Left cardiac atrium (tissue), 4 donors: ENCODE measurements at regions of chr6 and their contacts with region 1.

Region 1: DNA sequence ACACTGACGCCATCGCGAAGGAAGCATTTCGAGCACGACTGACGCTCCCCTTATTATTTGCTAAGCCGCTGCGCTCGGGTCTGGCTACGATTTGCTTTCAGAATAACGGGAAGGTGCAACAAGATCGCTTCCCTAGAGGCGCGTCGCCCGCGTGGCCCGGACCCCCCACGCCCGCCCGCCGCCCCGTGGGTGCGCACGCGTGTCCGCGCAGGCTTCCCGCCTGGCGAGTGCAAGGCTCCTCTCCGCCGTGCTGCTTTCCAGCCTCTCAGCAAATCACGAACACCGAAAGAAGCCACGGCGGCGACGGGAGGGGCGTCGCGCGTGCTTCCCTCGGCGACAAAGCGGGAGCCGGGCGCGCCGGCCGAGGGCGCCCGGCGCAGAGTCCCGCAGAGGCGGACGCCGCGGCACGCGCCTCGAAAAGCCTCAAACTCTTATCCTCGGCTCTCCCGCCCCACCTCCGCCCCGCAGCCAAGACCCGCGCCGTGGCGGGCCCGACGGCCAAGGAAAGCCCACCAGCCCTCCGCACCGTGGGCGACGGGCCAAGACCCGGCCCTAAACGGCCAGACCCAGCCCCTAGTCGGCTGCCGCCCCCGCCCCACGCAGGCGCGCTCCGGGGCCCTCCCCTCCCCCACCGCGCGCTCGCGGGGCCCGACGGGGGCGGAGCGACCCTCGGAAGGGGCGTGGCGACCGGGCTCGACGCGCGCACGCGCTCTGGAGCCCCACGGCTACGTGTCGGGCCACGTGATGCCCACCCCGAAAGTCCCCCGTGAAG is 987 bp upstream of the QKI start:
- DNase-seq: peak; percentile 91
- ATAC-seq: peak; percentile 92 to 94

Region 2: DNA sequence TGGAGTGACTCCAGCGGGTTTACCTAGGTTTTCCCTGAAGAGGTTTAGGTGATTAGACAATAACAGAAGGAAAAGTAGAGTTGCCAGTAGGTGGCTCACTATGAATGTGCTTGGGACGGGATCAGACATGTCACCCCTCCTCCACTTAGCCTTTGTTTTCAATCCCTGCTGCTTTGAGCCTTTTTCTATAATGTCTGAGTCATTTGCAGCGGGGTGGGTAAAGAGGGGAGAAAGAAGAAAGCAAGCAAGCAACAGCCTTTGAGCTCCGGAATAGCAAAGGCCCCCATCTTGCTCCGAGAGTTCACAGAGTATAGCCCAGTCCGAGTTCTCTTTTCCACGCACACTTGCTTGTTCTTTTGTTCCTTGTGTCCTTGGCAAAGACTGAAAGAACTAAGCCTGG is 556.6 kb before region 1 on chr6:
- intact Hi-C with region 1: loop called in 1 of 2 experiments (anchors 10 kb)
- DNase-seq: no peak
- ATAC-seq: peak; percentile 90 to 94

Region 3: GRCh38 chr6:163180874-163181541 is 232.5 kb before region 1 on chr6:
- intact Hi-C with region 1: loop called (anchors 2 to 10 kb)
- DNase-seq: peak; percentile 79
- ATAC-seq: peak; percentile 96 to 98

Region 4: GRCh38 chr6:163260111-163260895 is 153.2 kb before region 1 on chr6:
- intact Hi-C with region 1: loop called in 1 of 2 experiments (anchors 5 kb)
- DNase-seq: peak; percentile 51
- ATAC-seq: peak; percentile 47 to 64

Region 5: DNA sequence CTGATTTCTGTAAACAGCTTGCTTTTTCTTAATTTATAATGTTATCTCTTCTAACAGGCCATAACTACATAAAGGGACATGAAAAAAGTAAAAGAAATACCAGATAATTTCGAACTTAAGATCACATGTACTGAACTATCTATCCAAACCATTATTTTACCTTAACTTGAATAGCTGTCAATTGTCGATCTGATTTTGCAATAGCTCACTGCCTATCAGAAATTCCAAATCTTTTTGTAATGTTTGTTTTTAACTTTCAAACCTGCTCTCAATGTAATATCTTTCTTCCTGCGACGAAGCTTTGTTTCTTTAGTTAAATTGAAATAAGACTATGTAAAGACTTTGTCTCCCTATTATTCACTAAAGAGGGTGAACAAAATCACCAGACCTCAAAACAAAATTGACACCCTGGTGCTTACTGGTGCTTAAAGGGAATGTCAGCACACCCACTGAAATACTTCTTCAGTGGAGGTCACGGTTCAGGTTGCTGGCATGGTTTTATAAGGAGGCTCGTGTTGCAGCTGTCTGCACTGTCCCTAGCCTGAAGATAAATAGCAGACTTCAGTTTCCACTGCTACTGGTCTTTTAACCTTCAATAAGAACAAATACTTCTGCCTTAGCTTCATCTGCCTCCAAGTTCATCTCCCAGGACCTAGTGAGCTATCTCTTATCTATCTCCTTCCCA is 116.6 kb before region 1 on chr6:
- intact Hi-C with region 1: loop called in 1 of 2 experiments (anchors 10 kb)
- DNase-seq: no peak
- ATAC-seq: peak; percentile 75 to 82

Region 6: GRCh38 chr6:163956571-163957407 is 543.3 kb after region 1 on chr6:
- intact Hi-C with region 1: loop called in 1 of 2 experiments (anchors 5 kb)
- DNase-seq: peak; percentile 84
- ATAC-seq: peak; percentile 88 to 92